Colonic mucosa (tissue), 4 donors: ENCODE measurements at regions of chr2 and their contacts with region 1.

Region 1: DNA sequence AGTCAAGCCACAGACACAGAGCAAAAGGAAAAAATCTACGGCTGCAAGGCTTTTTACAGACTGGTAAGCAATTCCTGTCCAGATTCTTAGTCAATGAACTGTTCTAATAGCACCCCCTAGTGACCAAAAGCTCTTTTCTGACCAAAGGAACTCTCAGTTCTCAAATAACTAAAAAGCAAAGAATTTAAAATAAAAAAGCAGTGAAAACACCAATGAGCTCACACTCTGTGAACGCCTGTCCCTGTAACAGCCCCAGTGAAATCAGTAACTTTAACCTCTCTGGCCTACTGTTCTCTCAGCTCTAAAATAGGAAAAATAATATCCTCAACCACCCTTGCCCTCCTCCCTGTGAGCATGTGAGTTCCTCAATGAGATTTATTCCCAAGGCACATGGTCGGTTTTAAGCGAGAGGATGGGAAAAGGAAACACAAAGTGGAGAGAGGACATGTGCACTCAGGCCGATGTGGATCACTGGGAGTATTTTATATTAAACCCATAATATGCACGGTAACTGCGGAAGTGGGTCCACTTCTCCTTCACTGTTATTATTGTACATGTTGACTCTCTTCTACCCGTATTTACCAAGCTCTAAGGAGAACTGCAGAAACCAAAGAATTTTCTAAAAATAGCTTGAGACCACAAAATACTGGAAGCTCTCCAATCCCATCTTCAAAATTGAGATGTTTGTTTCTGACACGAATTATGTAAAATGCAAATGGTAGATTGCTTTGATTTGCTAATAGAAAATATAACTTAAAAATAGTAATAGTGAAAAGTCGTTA is 128.5 kb downstream of the STK39 start:
- DNase-seq: peak; percentile 43
- H3K4me3 ChIP-seq: no peak overlapping the region
- H3K27ac ChIP-seq: no peak overlapping the region
- H3K4me1 ChIP-seq: no peaks in the 10 kb centered on the region
- H3K27me3 ChIP-seq: no peaks in the 10 kb centered on the region
- CTCF ChIP-seq: peak; percentile 66

Region 2: GRCh38 chr2:166539340-166540162 is 1579.4 kb before region 1 on chr2:
- intact Hi-C with region 1: loop called (anchors 5 kb)
- DNase-seq: peak; percentile 26
- H3K4me3 ChIP-seq: no peak overlapping the region
- H3K27ac ChIP-seq: no peak overlapping the region
- H3K4me1 ChIP-seq: no peaks in the 10 kb centered on the region
- H3K27me3 ChIP-seq: no peaks in the 10 kb centered on the region
- CTCF ChIP-seq: peak; percentile 71

Region 3: GRCh38 chr2:167264380-167264779 is 854.5 kb before region 1 on chr2:
- intact Hi-C with region 1: loop called (anchors 5 kb)
- DNase-seq: peak; percentile 23
- H3K4me3 ChIP-seq: no peak overlapping the region
- H3K27ac ChIP-seq: no peak overlapping the region
- H3K4me1 ChIP-seq: no peaks in the 10 kb centered on the region
- H3K27me3 ChIP-seq: no peaks in the 10 kb centered on the region
- CTCF ChIP-seq: peak; percentile 42

Region 4: DNA sequence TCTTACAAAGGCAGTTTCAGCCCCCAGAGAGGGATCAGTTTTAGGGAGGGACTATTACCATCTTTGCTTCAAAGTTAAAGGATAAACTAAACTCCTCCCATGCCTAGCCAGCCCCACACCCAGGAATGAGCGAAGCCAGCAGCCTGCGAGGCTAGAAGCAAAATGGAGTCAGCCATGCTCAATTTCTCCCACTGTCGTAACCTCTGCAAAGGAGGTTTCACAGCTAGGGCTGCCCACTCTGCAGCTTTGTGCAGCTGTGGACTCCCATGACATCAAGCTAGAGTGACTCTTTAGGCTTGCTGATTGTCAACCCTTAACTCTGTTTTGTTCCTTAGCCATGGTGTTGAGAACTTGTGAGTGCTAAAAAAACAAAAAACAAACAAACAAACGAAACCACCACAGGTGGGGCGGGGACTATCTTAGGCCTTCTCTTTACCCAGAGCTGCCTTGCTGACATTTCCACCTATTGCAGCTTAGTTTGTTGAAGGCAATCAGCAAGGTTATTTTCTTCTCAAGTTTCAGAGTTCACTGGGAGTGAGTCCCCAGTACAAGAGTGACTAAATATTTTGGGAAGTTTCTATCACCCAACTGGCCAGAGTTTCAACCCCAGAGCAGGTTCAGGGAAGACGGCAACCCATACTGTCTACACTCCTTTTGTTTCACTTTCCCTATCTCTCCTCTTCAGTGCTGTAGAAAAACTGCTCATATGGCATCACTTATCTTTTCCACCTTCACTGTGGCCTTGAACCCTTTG is 638.5 kb before region 1 on chr2:
- intact Hi-C with region 1: no loop called
- DNase-seq: no peak
- H3K4me3 ChIP-seq: no peak overlapping the region
- H3K27ac ChIP-seq: no peak overlapping the region
- H3K4me1 ChIP-seq: no peaks in the 10 kb centered on the region
- H3K27me3 ChIP-seq: no peaks in the 10 kb centered on the region
- CTCF ChIP-seq: no peak

Region 5: GRCh38 chr2:167964650-167965413 is 154.1 kb before region 1 on chr2:
- intact Hi-C with region 1: loop called (anchors 5 kb)
- DNase-seq: no peak
- H3K4me3 ChIP-seq: no peak overlapping the region
- H3K27ac ChIP-seq: no peak overlapping the region
- H3K4me1 ChIP-seq: no peaks in the 10 kb centered on the region
- H3K27me3 ChIP-seq: no peaks in the 10 kb centered on the region
- CTCF ChIP-seq: no peak